Sigmoid colon (tissue), 7 donors: ENCODE measurements at regions of chr6 and their contacts with region 1.

Region 1: DNA sequence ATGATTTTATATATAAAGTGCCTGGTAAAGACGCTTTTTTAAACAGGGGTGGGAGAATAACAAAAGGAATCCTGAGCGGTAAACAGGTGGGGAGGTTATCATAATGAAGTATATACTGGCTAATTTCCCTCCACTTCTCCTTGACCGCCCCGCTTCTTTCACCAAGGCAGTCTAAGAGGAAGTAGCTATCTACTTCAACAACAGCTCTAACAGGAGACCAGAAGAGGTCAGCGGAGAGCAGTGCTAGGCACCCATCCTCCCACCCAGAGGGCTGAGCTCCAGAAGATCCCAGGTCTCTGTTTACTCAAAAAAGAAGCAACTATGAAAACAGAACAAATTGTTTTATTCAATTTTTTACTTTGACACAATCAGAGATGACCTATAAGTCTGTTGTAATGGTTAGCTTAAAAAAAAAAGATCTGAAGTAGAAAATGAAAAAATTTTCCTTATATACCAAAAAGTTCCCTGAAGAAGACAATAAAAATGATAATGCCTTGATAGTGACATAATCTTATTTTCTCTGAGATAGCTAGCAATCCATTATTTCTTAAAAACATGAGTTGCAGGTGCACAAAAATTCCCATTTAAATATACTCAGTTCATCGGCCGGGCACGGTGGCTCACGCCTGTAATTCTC is 141.1 kb downstream of the PDSS2 start:
- DNase-seq: no peak
- H3K4me3 ChIP-seq: no peak overlapping the region
- H3K27ac ChIP-seq: no peak overlapping the region
- H3K4me1 ChIP-seq: peaks cover 0 to 21% (median 2%) of the 10 kb centered on the region in 4 donors
- H3K27me3 ChIP-seq: no peaks in the 10 kb centered on the region
- CTCF ChIP-seq: peak in 3 of 4 experiments; percentile 22 to 51 (median 29)
- EP300 ChIP-seq: no peak
- POLR2A ChIP-seq: no peak

Region 2: DNA sequence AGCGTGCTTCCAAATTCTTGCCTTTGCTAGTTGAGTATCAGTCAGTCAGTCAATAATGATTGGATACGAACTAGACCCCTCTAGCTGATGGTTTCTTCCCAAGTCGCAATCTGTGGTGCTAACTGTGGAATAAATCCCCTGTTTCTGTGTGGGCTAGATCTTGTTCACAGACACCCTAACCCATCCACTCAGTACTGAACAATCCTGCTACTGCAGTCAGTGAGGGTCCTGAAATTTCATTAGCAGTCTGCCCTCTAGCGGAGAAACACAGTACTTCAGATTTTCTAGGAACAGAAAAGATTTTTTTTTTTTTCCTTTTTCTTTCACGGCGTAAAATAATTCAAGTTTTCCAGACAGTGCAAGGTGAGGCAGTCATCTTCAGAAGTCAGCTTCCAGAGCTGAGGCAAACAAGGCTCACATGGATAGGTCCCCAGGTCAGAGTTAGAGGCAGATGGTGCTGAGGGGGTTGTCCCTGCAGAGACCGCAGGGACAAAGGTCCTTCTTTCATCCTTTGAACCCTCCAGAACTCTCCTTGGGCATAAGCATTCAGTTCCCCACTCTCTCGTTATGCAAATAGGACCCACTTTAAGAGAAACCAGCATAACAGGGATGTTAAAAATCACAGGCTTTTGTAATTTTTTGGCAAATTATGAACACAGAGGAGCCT is 386.3 kb after region 1 on chr6:
- intact Hi-C with region 1: loop called (anchors 5 kb)
- DNase-seq: no peak
- H3K4me3 ChIP-seq: no peak overlapping the region
- H3K27ac ChIP-seq: no peak overlapping the region
- H3K4me1 ChIP-seq: peaks cover 0 to 3% (median 0%) of the 10 kb centered on the region in 4 donors
- H3K27me3 ChIP-seq: no peaks in the 10 kb centered on the region
- CTCF ChIP-seq: peak; percentile 43 to 85 (median 70)
- EP300 ChIP-seq: no peak
- POLR2A ChIP-seq: no peak

Region 3: DNA sequence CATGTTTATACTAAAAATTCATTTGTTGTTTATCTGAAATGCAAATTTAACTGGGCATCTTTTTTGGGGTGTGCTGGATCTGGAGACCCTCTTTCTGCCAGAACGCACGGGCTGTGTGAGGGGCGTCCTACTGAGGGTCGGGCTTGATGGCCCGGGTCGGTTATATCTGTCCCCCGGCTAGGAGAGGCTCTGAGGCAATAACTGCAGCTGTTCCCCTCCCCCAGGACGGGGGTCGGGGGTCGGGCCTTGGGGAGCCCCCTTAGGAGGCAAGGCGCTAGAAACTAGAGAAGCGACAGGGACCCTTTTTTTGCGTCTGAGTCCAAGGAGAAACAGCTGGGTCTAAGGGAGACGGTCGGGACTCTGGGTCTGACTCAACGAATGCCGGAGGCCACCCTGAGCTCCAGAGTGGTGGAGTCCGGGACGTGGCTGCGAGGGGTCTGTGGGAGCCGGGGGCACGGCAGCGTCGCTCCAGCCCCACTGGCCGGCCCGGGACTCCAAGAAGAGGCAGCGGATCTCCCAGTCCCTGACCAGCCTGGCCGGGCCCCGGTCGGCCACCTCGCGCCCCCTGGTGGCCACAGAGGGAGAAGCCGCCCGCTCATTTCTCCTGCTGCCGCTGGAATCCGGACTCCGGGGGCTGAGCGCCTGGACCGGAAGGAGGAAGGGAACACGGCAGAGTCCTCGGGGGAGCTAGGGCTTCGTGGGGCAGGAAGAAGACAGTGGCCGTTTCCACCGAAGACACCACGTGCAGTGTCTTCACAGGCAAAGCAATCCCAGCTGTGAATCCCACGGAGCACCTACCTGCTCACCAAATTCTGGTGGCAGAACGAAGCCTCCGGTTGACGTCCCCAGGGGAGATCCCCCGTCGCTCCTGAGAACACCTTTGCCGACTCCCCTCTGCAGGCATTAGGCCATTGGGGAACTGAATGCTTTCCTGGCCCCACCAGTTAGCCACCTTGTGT is 529.9 kb after region 1 on chr6:
- intact Hi-C with region 1: loop called (anchors 10 kb)
- DNase-seq: peak; percentile 91
- H3K4me3 ChIP-seq: peak overlapping the region; percentile 7 to 46 (median 42)
- H3K27ac ChIP-seq: no peak overlapping the region
- H3K4me1 ChIP-seq: peaks cover 0 to 13% (median 9%) of the 10 kb centered on the region in 4 donors
- H3K27me3 ChIP-seq: peaks cover 0 to 7% (median 0%) of the 10 kb centered on the region in 3 donors
- CTCF ChIP-seq: peak; percentile 33 to 97 (median 88)
- EP300 ChIP-seq: no peak
- POLR2A ChIP-seq: no peak